ENCODE measurements at regions of chr6 and their contacts with region 1.

Region 1: GRCh38 chr6:33161354-33162331 is 30.6 kb downstream of the COL11A2 start:
- DNase-seq: peak; percentile 69 to 86 (median 78)
- H3K4me3 ChIP-seq: peak overlapping the region in 3 of 4 donors; percentile 3 to 45 (median 39)
- H3K27ac ChIP-seq: no peak overlapping the region
- H3K4me1 ChIP-seq: peaks cover 0 to 5% of the 10 kb centered on the region in 2 donors
- H3K27me3 ChIP-seq: no peaks in the 10 kb centered on the region
- CTCF ChIP-seq: peak; percentile 75 to 96 (median 88)
- POLR2A ChIP-seq: no peak

Region 2: DNA sequence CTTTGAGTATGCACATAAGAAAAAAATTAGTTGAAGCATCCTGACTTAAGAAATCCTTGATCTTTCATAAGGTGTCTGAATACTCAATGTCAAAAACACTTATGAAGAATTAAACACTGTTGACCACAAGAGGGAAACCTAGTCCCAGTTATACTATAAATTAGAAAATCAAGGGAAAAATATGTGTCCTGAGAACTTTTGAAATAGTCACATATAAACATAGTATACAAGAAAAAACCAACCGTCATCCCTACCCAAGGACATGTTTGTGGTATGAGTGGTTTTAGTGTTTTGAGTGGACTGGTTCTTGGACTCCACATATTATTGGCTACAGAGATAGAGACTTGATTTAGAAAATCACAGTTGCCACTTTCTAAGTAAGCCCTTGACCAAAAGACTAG is 729.6 kb before region 1 on chr6:
- intact Hi-C with region 1: no loop called
- DNase-seq: no peak
- H3K4me3 ChIP-seq: no peak overlapping the region
- H3K27ac ChIP-seq: no peak overlapping the region
- H3K4me1 ChIP-seq: no peaks in the 10 kb centered on the region
- H3K27me3 ChIP-seq: peaks cover 3% of the 10 kb centered on the region
- CTCF ChIP-seq: peak; percentile 21 to 78 (median 66)
- POLR2A ChIP-seq: no peak

Region 3: DNA sequence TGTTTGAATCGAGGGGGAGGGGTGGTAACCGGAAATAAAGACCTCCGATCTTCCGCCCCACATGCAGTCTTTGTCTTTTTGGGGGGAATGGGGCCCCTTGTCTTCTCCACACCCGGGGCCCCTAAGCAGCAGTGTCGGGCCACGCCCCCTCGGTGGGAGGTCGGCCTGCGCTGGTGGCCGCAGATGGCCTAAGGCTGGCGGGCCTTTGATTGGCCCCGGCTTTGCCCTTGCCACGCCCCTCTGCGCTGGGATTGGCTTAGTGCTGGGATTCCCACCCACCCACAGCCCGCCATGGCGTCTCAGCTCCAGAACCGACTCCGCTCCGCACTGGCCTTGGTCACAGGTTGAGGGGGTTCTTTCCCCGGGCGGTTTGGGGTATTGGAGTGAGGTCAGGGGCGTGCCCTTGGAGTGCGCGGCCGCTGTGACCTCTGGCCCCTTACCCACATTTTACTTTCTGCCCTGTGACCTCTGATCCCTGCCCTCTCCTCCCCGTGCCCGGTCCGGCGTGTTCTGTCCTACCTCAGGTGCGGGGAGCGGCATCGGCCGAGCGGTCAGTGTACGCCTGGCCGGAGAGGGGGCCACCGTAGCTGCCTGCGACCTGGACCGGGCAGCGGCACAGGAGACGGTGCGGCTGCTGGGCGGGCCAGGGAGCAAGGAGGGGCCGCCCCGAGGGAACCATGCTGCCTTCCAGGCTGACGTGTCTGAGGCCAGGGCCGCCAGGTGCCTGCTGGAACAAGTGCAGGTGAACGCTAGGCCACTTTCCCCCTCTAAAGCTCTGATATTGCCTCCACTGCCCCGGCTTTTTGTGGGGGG is 42.9 kb after region 1 on chr6 and contains the start of gene HSD17B8:
- intact Hi-C with region 1: loop called (anchors 5 kb)
- DNase-seq: peak; percentile 91 to 97 (median 96)
- H3K4me3 ChIP-seq: peak within 1 kb of the TSS; percentile 21 to 65 (median 38)
- H3K27ac ChIP-seq: peak within 1 kb of the TSS in 3 of 5 donors; percentile 28 to 76 (median 40)
- H3K4me1 ChIP-seq: peaks cover 31 to 43% of the 10 kb centered on the region in 2 donors
- H3K27me3 ChIP-seq: no peaks in the 10 kb centered on the region
- CTCF ChIP-seq: no peak
- POLR2A ChIP-seq: peak; percentile 34 to 42
- total RNA-seq, gene HSD17B8: 13.4 to 96.3 (median 42.8) TPM

Measured in adrenal gland (tissue), 19 donors.